AG04449 (cell line): ENCODE measurements at regions of chr22 and their contacts with region 1.

Region 1: GRCh38 chr22:39170825-39171622 is 18.5 kb upstream of the CBX7 start:
- DNase-seq: no peak
- H3K4me3 ChIP-seq: no peak overlapping the region
- CTCF ChIP-seq: peak; percentile 95

Region 2: GRCh38 chr22:39148747-39149561 is 22.1 kb before region 1 on chr22:
- CTCF ChIA-PET with region 1: interaction called, 27 read pairs
- POLR2A ChIA-PET with region 1: no interaction called
- DNase-seq: no peak
- H3K4me3 ChIP-seq: no peak overlapping the region
- CTCF ChIP-seq: no peak

Region 3: DNA sequence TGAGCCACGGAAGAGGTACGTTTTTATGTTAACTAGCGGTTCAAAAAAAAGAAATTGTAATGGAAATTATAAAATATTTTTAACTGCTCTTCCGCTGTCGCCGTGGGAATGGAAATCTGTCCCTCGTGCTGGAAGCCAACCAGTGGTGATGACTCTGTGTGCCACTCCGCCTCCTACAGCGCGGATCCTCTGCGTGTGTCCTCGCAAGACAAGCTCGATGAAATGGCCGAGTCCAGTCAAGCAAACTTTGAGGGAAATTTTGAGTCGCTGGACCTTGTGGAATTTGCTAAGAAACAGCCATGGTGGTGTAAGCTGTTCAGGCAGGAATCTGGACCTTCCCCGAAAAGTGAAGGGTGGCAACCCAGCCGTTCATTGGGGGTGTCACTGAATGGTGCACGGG is 15.6 kb before region 1 on chr22:
- CTCF ChIA-PET with region 1: interaction called, 27 read pairs
- POLR2A ChIA-PET with region 1: no interaction called
- DNase-seq: no peak
- H3K4me3 ChIP-seq: no peak overlapping the region
- CTCF ChIP-seq: no peak

Region 4: GRCh38 chr22:39197396-39197977 is 26.5 kb after region 1 on chr22:
- CTCF ChIA-PET with region 1: no interaction called
- POLR2A ChIA-PET with region 1: no interaction called
- DNase-seq: no peak
- H3K4me3 ChIP-seq: no peak overlapping the region
- CTCF ChIP-seq: no peak

Region 5: DNA sequence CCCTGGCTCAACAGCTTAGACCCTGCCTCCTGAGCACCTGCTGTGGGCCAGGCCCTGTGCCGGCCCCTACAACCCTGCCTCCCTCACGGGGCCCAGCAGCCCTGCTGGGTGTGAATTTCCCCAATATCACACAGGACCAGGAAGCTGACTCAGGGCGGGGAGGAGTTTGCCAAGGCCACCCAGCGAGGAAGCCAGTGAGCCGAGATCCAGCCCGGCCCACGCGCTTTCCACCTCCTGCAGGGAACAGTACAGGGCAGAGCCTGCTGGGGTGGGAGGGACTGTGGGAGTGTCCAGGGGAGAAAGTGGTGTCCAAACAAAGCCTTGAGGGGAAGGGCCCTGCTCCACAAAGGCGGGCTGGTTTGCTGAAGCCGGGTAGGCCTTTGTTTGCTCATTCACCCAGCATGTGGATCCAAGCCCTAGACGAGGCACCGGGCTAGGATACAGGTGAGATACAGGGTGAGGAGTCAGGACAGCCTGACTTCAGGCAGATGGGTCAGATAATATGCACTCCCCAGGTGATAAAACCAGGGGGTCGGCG is 121.6 kb after region 1 on chr22:
- CTCF ChIA-PET with region 1: interaction called, 16 read pairs
- POLR2A ChIA-PET with region 1: no interaction called
- DNase-seq: peak; percentile 57
- H3K4me3 ChIP-seq: no peak overlapping the region
- CTCF ChIP-seq: no peak

Region 6: DNA sequence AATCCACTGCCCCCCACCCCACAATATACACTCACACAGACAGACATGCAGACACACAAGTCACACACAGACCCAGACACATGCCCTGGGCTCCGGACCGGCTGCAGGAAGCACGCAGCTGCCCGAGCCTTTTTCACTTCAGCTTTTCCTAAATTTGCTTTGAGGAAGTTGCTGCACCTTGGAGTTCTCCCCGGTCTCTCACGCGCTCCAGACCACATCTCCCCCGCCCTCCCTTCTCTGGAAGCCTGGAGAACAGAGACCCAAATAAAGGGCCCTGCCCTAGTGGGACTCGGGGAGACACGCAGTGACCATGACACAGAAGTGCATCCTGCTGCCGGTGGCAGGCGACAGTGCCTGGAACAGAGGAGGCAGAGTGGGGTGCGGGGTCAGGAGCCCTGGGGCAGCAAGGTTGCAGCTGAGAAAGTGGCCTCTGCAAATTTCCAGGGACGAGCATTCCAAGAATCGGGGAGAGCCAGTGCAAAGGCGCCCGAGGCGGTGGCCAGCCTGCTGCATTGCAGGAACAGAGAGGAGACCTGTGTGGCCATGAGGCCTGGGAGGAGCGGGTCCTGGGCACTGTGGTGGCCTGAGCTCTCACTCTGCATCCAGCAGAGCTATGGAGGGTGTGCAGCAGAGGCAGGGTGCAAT is 129.3 kb after region 1 on chr22:
- CTCF ChIA-PET with region 1: interaction called, 15 read pairs
- POLR2A ChIA-PET with region 1: no interaction called
- DNase-seq: no peak
- H3K4me3 ChIP-seq: no peak overlapping the region
- CTCF ChIP-seq: no peak

Region 7: DNA sequence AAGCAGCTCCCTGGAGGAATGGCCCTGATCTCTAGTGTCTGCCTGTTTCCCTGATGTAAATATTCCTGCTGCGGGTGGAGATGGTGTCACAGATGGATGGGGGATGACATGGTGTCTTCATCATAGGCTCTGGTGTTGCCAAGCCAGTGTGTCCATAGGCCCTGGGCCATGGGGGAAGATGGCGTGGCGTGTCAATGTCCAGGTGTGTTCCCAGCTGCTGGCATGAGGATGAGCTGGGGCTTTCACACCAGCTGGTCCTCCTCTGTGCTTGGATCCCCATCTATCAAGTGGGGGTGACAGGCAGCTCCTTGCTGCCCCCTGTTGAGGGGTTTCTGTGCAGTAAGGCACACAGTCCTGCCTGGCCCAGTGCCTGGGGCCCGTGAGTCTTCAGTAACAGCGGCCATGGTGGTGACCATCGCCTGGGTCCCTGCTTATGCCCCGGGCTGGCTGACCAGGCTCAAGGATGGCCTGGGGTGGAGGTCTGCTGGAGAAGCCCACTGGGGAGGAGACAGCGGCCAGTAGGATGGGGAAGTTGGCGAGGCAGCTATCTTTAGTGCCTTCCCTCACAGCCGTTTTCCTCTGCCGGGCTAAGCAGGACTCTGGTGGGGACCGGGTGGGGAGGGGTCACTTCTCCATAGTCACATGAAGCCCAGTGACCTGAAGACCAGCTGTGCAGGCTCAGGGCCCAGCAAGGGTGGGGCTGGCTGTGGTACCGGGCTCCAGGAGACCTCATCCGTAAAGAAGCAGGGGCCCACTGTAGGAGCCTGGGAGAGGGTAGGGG is 135.7 kb after region 1 on chr22:
- CTCF ChIA-PET with region 1: interaction called, 158 read pairs
- POLR2A ChIA-PET with region 1: interaction called, 29 read pairs
- DNase-seq: no peak
- H3K4me3 ChIP-seq: no peak overlapping the region
- CTCF ChIP-seq: peak; percentile 4

Region 8: DNA sequence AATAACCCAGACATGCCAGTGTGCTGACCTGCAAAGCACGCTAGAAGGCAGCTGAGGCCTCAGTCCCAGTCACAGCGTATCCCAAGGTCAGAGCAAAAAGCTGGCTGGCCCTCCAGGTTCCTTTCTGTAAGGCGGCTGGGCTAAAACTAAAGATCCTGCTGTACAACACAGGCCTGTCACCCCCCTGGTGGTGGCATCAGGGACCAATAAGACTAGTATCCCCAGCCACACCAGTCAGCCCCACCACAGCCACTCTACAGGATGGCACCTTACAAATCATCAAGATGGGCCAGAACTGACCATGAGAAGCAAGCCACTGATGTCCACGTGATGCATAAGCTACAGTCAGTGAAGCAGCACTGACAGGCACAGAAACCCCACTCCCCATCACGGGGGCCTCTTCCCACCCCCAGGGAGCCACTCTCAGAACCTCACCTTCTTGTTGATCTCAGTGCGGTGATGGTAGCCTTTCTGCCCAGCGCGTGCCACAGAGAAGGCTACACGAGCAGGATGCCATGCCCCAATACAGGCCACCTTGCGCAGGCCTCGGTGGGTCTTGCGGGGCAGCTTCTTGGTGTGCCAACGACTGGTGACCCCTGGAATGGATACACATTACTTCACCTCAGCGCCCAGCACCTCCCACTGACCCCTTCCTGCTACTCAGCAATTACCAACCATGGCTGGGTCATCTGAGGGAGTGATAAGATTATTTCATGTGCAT is 143.4 kb after region 1 on chr22:
- CTCF ChIA-PET with region 1: interaction called, 258 read pairs
- POLR2A ChIA-PET with region 1: interaction called, 29 read pairs
- DNase-seq: no peak
- H3K4me3 ChIP-seq: no peak overlapping the region; the same call in 1 of the 2 replicates
- CTCF ChIP-seq: peak; percentile 3